Activated CD8-positive, alpha-beta memory T cell treated with anti-CD3 and anti-CD28 coated beads, Interleukin-2, amount 10 ng/mL, durations not matched to agents 7 days and 5 days (primary cell): ENCODE measurements at regions of chr5 and their contacts with region 1.

Region 1: GRCh38 chr5:91419571-91420537 is 36.7 kb upstream of the ARRDC3 start:
- DNase-seq: peak; percentile 80
- ATAC-seq: peak; percentile 63
- H3K4me3 Mint-ChIP-seq: no peak overlapping the region
- H3K27ac Mint-ChIP-seq: no peak overlapping the region
- H3K4me1 Mint-ChIP-seq: peaks cover 14% of the 10 kb centered on the region
- H3K27me3 Mint-ChIP-seq: peaks cover 2% of the 10 kb centered on the region

Region 2: DNA sequence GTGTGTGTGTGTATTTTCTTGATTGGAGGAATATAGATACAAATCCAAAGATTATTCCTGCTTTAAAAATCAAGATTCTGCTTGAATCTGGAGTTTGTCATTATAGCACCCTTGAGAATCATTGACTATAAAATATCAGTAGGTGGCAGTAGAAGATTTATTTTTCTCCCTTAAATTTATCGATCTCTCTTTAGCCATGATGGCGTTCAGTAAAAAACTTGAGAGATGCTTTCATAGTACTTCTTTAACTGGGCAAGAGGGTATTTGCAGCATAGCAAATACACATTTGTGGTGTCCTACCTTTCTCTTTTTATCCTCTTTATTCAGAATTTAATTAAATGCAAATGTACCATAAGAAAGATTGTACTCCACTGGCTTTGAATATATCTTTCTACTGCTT is 553.5 kb before region 1 on chr5:
- CTCF ChIA-PET with region 1: interaction called, 16 read pairs
- DNase-seq: no peak
- ATAC-seq: no peak
- H3K4me3 Mint-ChIP-seq: no peak overlapping the region
- H3K27ac Mint-ChIP-seq: no peak overlapping the region
- H3K4me1 Mint-ChIP-seq: peaks cover 2% of the 10 kb centered on the region
- H3K27me3 Mint-ChIP-seq: peaks cover 28% of the 10 kb centered on the region

Region 3: DNA sequence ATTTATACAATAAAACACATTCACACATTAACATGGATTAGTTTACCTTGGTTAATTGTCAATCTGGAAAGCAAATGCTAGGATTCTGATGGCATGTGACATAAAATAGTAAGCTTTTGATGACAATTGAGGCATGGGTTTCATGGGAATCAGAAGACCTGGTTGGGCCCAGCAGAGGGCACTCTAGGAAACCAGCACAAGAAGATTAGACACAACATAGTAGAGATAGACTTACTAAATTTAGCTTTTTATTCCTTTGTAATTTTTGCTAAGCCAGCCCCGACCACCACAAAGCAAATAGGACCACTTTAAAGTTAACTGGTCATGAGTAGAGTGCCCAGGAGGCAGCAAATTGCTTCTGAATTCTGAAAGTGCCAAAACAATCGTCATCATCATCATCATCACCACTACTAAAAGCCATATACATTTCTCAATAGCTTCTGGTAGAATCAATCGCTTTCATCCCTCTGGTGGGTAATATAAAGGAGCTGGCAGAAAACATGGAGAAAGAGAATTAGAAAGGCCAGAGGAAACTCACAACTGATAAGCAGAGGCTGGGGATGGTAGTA is 200.0 kb before region 1 on chr5:
- CTCF ChIA-PET with region 1: interaction called, 17 read pairs
- DNase-seq: peak; percentile 44
- ATAC-seq: peak; percentile 60
- H3K4me3 Mint-ChIP-seq: no peak overlapping the region
- H3K27ac Mint-ChIP-seq: no peak overlapping the region
- H3K4me1 Mint-ChIP-seq: no peaks in the 10 kb centered on the region
- H3K27me3 Mint-ChIP-seq: peaks cover 9% of the 10 kb centered on the region

Region 4: DNA sequence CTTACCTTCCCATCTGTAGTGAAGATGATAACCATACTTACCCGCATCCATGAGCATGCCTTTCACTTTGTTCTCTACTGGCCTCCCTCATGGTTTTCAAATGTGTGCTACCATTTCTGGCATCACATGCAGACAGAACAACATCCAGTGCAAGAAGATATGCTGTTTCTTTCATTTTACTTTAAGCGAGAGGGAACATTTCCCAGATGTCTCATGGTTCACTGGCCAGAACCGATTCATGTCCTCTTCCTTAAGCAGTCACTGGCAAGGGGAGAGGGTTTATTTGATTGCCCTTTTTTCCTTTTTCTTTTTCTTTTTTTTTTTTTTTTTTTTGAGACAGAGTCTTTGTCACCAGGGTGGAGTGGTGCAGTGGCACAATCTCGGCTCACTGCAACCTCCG is 74.4 kb before region 1 on chr5:
- CTCF ChIA-PET with region 1: no interaction called
- DNase-seq: no peak
- ATAC-seq: no peak
- H3K4me3 Mint-ChIP-seq: no peak overlapping the region
- H3K27ac Mint-ChIP-seq: no peak overlapping the region
- H3K4me1 Mint-ChIP-seq: no peaks in the 10 kb centered on the region
- H3K27me3 Mint-ChIP-seq: peaks cover 3% of the 10 kb centered on the region

Region 5: GRCh38 chr5:91403438-91403837 is 16.4 kb before region 1 on chr5:
- CTCF ChIA-PET with region 1: interaction called, 18 read pairs
- DNase-seq: no peak
- ATAC-seq: no peak
- H3K4me3 Mint-ChIP-seq: no peak overlapping the region
- H3K27ac Mint-ChIP-seq: no peak overlapping the region
- H3K4me1 Mint-ChIP-seq: peaks cover under 1% of the 10 kb centered on the region
- H3K27me3 Mint-ChIP-seq: no peaks in the 10 kb centered on the region

Region 6: GRCh38 chr5:91433861-91434260 is 14.0 kb after region 1 on chr5:
- CTCF ChIA-PET with region 1: interaction called, 17 read pairs
- DNase-seq: no peak
- ATAC-seq: no peak
- H3K4me3 Mint-ChIP-seq: no peak overlapping the region
- H3K27ac Mint-ChIP-seq: no peak overlapping the region
- H3K4me1 Mint-ChIP-seq: peaks cover 13% of the 10 kb centered on the region
- H3K27me3 Mint-ChIP-seq: no peaks in the 10 kb centered on the region

Region 7: DNA sequence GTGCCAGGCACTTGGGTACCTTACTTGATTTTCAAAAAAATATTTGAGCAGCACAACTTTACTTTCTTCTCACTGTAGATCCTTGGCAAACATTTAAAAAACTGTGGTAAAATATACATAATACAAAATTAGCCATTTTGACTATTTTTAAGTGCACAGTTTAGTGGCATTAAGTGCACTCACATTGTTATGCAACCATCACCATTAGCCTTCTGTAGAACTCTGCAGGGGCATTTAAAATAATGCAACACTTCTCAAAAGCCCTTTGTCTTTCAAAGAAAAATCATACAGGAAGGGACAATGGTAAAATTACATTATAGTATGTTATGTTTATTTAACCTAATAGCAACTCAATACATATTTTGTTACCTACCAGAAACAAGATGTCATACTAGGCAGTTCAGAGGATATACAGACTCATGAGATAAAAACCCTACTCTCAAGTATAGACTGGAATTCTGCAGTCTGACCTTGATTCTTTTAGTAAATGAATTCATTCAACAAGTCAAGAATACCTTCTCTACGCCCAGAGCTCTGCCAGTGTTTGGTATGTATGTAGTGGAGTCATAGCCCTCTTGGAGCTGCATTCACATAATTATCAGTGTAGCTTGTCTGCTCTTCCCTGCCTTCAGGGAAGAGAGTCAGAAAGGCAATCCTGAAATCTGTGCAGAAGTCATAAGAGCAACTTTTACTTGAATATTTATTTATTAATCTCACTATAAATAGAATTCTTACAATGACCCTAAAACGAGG is 37.2 kb after region 1 on chr5:
- CTCF ChIA-PET with region 1: no interaction called
- DNase-seq: no peak
- ATAC-seq: no peak
- H3K4me3 Mint-ChIP-seq: no peak overlapping the region
- H3K27ac Mint-ChIP-seq: no peak overlapping the region
- H3K4me1 Mint-ChIP-seq: no peaks in the 10 kb centered on the region
- H3K27me3 Mint-ChIP-seq: no peaks in the 10 kb centered on the region

Region 8: GRCh38 chr5:91541696-91542095 is 121.8 kb after region 1 on chr5:
- CTCF ChIA-PET with region 1: no interaction called
- DNase-seq: no peak
- ATAC-seq: no peak
- H3K4me3 Mint-ChIP-seq: no peak overlapping the region
- H3K27ac Mint-ChIP-seq: no peak overlapping the region
- H3K4me1 Mint-ChIP-seq: no peaks in the 10 kb centered on the region
- H3K27me3 Mint-ChIP-seq: no peaks in the 10 kb centered on the region